ENCODE measurements at regions of chr2 and their contacts with region 1.

Region 1: DNA sequence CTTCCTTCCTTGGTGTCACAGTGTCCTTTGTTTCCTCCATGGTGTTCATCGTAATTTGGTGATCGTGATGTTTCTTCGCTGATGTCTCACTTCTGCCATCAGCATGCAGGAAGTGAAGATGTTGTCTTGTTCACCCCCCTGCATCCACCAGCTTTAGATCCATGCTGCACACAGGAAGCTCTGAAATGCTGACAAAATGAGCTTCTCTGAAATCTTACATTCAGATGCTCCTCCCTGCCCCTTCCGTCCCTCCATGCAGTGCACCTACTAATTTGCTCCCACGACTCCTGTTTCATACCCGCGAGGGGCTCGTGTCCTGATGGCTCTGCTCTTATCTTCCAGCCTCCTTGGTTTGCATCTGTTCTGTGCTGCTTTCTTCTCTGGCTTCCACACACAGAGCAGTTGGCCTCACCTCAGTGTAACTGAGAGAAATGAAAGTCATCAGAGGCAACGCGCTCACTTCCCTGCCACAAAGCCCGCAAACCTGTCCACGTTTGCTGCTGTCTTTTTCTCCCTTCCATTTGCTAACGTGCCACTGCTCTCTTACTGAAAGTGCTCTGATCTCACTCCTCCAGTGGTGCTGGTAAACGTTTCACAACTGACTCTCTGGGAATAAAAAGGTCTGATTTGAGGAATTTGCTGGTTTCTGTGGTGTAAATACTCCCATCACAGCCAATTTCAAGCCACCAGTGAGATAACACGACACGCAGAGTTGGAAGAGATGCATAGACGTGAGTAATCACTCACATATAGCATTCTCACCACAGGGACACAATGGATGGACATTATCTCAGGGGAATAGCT is 41.0 kb upstream of the MGAT4A start:
- DNase-seq: peak; percentile 36 to 93 (median 68)
- ATAC-seq: peak; percentile 68
- H3K4me3 ChIP-seq: peak overlapping the region; percentile 39 to 50
- H3K4me3 Mint-ChIP-seq: peak overlapping the region; percentile 87
- H3K27ac ChIP-seq: peak overlapping the region; percentile 79 to 89
- H3K27ac Mint-ChIP-seq: peak overlapping the region; percentile 98
- H3K4me1 ChIP-seq: peaks cover 67% of the 10 kb centered on the region
- H3K4me1 Mint-ChIP-seq: peaks cover 77% of the 10 kb centered on the region
- H3K27me3 ChIP-seq: no peaks in the 10 kb centered on the region
- H3K27me3 Mint-ChIP-seq: no peaks in the 10 kb centered on the region
- CTCF ChIP-seq: no peak

Region 2: DNA sequence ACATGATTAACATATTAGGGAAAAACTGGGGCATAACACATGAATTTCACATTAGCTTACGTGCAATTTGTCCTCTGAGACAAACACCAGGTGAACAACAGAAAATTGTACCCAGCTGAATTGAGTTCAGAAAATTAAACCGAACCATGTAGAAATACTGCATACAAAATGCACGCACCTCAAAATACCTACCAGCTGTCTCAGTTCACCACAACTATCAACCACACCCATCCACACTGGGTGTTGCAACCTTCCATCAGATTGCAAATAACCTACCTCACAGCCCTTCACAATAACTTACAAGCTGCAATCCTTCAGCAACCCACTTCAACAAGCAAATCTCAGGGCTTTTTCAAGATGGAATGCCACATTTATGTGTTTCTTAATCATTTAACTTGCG is 107.6 kb before region 1 on chr2:
- CTCF ChIA-PET with region 1: interaction called, 5 read pairs
- POLR2A ChIA-PET with region 1: interaction called, 56 read pairs
- intact Hi-C with region 1: no loop called
- DNase-seq: peak; percentile 19 to 86 (median 60)
- ATAC-seq: peak; percentile 68
- H3K4me3 ChIP-seq: peak overlapping the region; percentile 19 to 55
- H3K4me3 Mint-ChIP-seq: peak overlapping the region; percentile 64
- H3K27ac ChIP-seq: peak overlapping the region; percentile 54 to 80
- H3K27ac Mint-ChIP-seq: peak overlapping the region; percentile 95
- H3K4me1 ChIP-seq: peaks cover 64% of the 10 kb centered on the region
- H3K4me1 Mint-ChIP-seq: peaks cover 72% of the 10 kb centered on the region
- H3K27me3 ChIP-seq: no peaks in the 10 kb centered on the region
- H3K27me3 Mint-ChIP-seq: no peaks in the 10 kb centered on the region
- CTCF ChIP-seq: no peak

Region 3: DNA sequence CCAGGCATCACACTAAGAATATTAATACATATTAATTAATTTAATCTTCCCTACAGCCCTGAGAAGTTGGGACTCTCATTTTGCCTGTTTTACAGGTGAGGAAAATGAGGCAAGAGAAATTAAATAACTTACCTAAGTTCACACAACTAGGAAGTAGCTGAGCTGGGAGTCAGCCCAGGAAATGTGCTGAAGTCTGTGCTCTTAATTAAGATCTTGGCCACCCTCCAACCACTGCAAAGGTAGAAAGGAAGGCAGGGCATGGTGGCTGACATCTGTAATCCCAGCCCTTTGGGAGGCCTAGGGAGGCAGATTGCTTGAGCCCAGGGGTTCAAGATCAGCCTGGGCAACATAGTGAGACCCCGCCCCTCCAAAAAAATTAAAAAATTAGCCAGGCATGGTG is 28.1 kb before region 1 on chr2:
- CTCF ChIA-PET with region 1: interaction called, 3 read pairs
- POLR2A ChIA-PET with region 1: interaction called, 13 read pairs
- intact Hi-C with region 1: no loop called
- DNase-seq: no peak
- ATAC-seq: peak; percentile 34
- H3K4me3 ChIP-seq: no peak overlapping the region
- H3K4me3 Mint-ChIP-seq: no peak overlapping the region
- H3K27ac ChIP-seq: no peak overlapping the region
- H3K27ac Mint-ChIP-seq: peak overlapping the region; percentile 41
- H3K4me1 ChIP-seq: peaks cover 39% of the 10 kb centered on the region
- H3K4me1 Mint-ChIP-seq: peaks cover 61% of the 10 kb centered on the region
- H3K27me3 ChIP-seq: no peaks in the 10 kb centered on the region
- H3K27me3 Mint-ChIP-seq: no peaks in the 10 kb centered on the region
- CTCF ChIP-seq: no peak

Region 4: GRCh38 chr2:98795891-98796676 is 24.2 kb after region 1 on chr2:
- CTCF ChIA-PET with region 1: no interaction called
- POLR2A ChIA-PET with region 1: interaction called, 3 read pairs
- intact Hi-C with region 1: loop called in 1 of 2 experiments (anchors 2 kb)
- DNase-seq: no peak
- ATAC-seq: no peak
- H3K4me3 ChIP-seq: no peak overlapping the region
- H3K4me3 Mint-ChIP-seq: no peak overlapping the region
- H3K27ac ChIP-seq: no peak overlapping the region
- H3K27ac Mint-ChIP-seq: no peak overlapping the region
- H3K4me1 ChIP-seq: no peaks in the 10 kb centered on the region
- H3K4me1 Mint-ChIP-seq: no peaks in the 10 kb centered on the region
- H3K27me3 ChIP-seq: no peaks in the 10 kb centered on the region
- H3K27me3 Mint-ChIP-seq: no peaks in the 10 kb centered on the region
- CTCF ChIP-seq: no peak

Region 5: DNA sequence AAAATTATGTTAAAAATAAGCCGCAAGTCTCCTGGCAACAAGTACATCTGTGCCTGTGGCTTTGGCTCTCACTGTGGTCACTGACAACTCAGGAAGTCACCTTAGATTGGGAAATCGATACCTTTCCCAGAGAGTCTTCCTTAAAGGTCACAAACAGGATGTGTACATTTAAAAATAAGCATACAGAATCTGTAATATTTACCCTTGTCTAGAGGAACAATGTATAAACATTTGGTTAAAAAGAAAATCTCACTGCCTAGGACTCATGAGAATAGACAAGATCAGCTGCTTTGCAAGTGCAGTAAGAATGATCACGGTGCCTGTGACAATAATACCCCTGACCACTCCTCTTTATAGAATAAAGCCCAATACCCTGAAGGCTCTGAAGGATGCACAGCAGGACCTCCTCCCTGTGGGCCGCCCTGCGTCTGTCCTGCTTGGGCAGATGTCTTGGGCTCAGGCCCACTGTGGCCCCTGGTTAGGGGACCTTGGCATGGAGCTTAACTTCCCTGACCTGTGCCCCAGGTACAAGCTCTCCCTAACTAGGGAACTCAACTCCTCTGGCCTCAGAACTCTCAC is 57.0 kb after region 1 on chr2:
- CTCF ChIA-PET with region 1: interaction called, 9 read pairs
- POLR2A ChIA-PET with region 1: interaction called, 27 read pairs
- intact Hi-C with region 1: loop called (anchors 5 kb)
- DNase-seq: peak in 3 of 9 experiments; percentile 38 to 62 (median 40)
- ATAC-seq: peak; percentile 44
- H3K4me3 ChIP-seq: no peak overlapping the region
- H3K4me3 Mint-ChIP-seq: no peak overlapping the region
- H3K27ac ChIP-seq: no peak overlapping the region
- H3K27ac Mint-ChIP-seq: peak overlapping the region; percentile 84
- H3K4me1 ChIP-seq: peaks cover 31% of the 10 kb centered on the region
- H3K4me1 Mint-ChIP-seq: peaks cover 53% of the 10 kb centered on the region
- H3K27me3 ChIP-seq: no peaks in the 10 kb centered on the region
- H3K27me3 Mint-ChIP-seq: no peaks in the 10 kb centered on the region
- CTCF ChIP-seq: no peak

Region 6: GRCh38 chr2:98948956-98949739 is 177.2 kb after region 1 on chr2:
- CTCF ChIA-PET with region 1: no interaction called
- POLR2A ChIA-PET with region 1: no interaction called
- intact Hi-C with region 1: no loop called
- DNase-seq: no peak
- ATAC-seq: no peak
- H3K4me3 ChIP-seq: no peak overlapping the region
- H3K4me3 Mint-ChIP-seq: no peak overlapping the region
- H3K27ac ChIP-seq: no peak overlapping the region
- H3K27ac Mint-ChIP-seq: no peak overlapping the region
- H3K4me1 ChIP-seq: no peaks in the 10 kb centered on the region
- H3K4me1 Mint-ChIP-seq: no peaks in the 10 kb centered on the region
- H3K27me3 ChIP-seq: peaks cover 0 to 3% of the 10 kb centered on the region in 2 experiments
- H3K27me3 Mint-ChIP-seq: peaks cover 26% of the 10 kb centered on the region
- CTCF ChIP-seq: no peak

Measured in CD8-positive, alpha-beta T cell (primary cell).